AG04449 (cell line): ENCODE measurements at regions of chr17 and their contacts with region 1.

Region 1: DNA sequence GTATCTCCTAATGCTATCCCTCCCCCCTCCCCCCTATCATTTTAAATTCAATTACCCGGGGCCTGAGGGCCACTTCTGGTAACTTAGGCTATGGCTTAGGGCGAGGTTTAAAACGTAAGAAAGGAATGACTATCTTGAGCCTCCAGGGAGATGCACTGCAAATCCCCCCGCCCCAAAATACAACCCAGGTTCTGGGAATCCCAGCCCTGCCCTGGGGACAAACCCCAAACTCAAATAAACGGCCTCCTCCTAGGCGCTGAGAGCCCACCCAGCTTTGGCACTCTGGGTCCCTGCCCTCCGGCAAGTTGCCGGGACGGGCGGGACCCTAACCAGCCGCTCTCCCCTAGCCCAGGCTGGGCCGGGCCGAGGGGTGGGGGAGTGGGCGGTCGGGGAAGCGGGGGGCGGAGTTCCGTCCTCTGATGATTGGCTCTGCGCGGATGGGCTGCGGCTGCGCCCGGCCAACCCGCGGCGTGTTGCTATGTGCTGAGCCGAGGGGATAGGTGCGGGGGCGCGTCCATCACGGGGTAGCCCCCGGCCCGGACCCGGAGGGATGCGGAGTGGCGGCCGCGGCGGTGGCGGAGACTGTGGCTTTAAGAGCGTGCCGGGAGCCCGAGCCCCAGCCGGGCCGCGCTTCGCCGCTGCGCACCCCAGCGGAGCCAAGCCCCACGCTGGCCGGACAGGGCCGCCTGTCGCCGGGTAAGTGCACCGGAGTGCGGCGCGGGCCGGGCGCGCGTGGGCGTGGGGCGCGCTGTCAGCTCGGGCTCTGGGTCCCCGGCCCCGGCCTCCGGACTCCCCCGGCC is at the start of gene YPEL2:
- DNase-seq: peak; percentile 65
- H3K4me3 ChIP-seq: peak within 1 kb of the TSS; percentile 75
- CTCF ChIP-seq: no peak

Region 2: DNA sequence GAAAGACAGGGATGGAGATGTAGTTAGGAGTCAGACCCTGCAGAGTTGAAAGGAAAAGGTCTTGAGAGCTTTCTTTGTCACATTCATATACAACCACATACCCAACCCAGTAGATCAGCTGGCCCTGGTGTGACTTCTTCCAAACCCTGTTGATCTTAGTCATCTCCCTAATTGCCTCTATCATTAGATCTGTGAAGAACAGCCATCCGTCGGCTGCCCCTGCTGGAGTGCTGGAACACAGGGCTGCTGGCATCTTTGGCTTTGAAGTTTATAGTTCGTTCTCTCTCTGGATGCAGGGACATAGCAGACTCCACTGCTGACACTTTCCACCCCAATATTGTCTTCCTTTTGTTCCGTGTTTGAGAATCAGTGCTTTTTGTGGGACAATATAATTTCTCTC is 131.9 kb before region 1 on chr17:
- CTCF ChIA-PET with region 1: no interaction called
- POLR2A ChIA-PET with region 1: no interaction called
- DNase-seq: no peak
- H3K4me3 ChIP-seq: no peak overlapping the region
- CTCF ChIP-seq: no peak

Region 3: DNA sequence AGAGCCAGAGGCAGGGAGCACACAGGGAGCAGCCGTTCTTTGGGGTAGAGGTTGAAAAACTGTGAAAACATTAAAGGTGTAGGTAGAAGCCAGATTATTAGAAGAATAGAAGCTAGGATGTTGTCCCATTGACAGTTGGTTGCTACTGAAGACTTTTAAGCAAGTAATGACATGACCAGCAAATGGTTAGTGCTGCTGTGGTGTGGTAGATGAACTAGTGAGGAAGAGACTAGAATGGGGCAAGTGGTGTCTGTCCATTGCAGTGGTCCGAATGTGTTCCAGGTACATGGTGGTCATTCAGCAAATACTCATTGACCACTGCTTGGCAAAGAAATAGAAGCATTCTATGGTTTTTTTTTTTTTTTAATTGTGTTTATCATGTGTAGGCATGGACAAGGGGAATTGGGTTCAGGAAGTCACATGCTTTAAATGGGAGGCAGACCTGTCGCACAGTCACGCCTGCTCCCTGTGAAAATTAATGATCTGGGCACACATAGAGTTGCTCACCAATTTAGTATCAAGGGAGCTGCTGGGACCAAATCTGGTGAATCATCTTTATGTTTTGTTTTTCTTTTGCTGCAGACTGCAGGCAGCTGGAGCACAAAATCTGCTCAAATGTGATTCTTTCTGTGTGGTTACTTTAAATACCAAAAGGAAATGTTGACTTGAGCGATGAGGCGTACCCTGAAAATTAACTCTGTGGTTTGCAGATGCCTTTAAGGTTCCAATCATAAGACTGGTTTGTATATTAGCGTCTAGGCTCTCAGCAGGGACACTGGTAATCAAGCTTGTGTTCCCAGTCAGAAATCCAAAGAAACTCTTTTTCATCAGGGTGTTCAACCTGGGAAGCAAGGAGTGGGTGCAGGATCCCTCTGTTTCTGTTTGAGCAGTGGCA is 30.8 kb after region 1 on chr17:
- CTCF ChIA-PET with region 1: interaction called, 11 read pairs
- POLR2A ChIA-PET with region 1: no interaction called
- DNase-seq: peak; percentile 91
- H3K4me3 ChIP-seq: no peak overlapping the region; the same call in 1 of the 2 replicates
- CTCF ChIP-seq: no peak

Region 4: DNA sequence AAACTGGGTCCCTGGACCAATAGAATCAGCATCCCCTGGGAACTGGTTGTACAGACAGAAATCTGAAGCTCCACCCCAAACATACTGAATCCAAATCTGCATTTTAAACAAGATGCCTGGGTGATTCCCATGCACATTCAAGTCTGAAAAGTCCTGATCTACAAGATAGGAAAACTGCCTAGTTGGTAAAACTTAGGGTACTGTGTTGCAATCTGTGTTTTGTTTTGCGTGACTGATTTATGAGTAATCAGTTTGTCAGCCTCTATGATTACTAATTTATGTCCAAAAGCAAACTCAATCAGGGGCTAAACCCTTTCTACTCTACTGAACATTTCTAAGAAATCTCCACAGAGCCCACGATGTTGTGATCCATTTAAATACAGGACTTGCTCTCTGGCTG is 103.9 kb after region 1 on chr17:
- CTCF ChIA-PET with region 1: interaction called, 342 read pairs
- POLR2A ChIA-PET with region 1: no interaction called
- DNase-seq: no peak
- H3K4me3 ChIP-seq: no peak overlapping the region
- CTCF ChIP-seq: no peak

Region 5: DNA sequence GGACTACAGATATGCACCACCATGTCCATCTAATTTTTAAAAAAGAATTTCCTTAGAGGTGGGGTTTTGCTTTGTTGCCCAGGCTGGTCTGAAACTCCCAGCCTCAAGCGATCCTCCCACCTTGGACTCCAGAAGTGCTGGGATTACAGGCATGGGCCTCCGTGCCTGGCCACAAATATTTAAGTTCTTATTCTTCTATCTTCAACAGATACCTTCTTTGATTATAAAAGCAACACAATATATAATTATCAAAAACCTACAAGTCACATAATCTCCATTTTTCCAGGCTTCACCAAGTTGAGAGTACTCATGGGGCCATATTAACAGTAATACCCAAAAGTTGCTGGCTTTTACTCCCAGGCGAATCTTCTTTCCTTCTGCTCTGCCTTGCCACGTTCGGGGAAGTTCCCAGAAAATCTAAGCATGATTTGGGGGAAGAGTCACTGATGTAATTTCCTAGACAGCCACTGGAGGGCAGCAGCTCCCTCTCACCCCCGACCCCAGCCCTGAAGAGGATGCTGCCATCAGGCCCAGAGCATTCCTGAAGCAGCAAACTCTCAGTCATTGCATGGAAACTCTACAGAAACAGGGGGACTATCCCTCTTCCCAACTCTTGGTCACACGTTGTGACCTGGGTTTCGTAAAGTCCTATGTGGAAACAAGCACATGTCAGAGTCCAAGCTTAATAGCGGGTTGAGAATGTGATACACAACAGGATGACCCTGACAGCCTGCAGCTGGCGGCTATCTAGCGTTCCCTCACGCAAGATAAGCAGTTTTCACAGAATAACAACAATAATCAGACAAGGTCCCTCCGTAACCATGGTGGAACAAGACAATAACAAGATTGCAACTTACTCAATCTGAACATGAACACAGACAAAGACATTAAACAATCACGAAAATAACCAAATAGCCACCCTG is 190.1 kb after region 1 on chr17:
- CTCF ChIA-PET with region 1: interaction called, 11 read pairs
- POLR2A ChIA-PET with region 1: no interaction called
- DNase-seq: no peak
- H3K4me3 ChIP-seq: no peak overlapping the region
- CTCF ChIP-seq: peak; percentile 81